Activated CD8-positive, alpha-beta T cell treated with anti-CD3 and anti-CD28 coated beads, Interleukin-2, amount 10 ng/mL, durations not matched to agents 7 days and 5 days (primary cell): ENCODE measurements at regions of chr10 and their contacts with region 1.

Region 1: GRCh38 chr10:69392481-69393000 is 24.2 kb downstream of the TACR2 start:
- DNase-seq: peak; percentile 90
- ATAC-seq: peak; percentile 92
- H3K4me3 Mint-ChIP-seq: no peak overlapping the region
- H3K27ac Mint-ChIP-seq: peak overlapping the region; percentile 71
- H3K4me1 Mint-ChIP-seq: peaks cover 29% of the 10 kb centered on the region
- H3K27me3 Mint-ChIP-seq: no peaks in the 10 kb centered on the region

Region 2: GRCh38 chr10:69229622-69229928 is 163.0 kb before region 1 on chr10:
- CTCF ChIA-PET with region 1: interaction called, 173 read pairs
- POLR2A ChIA-PET with region 1: no interaction called
- DNase-seq: no peak
- ATAC-seq: no peak
- H3K4me3 Mint-ChIP-seq: peak overlapping the region; percentile 80
- H3K27ac Mint-ChIP-seq: peak overlapping the region; percentile 98
- H3K4me1 Mint-ChIP-seq: peaks cover 86% of the 10 kb centered on the region
- H3K27me3 Mint-ChIP-seq: no peaks in the 10 kb centered on the region

Region 3: GRCh38 chr10:69237528-69238159 is 154.9 kb before region 1 on chr10:
- CTCF ChIA-PET with region 1: interaction called, 173 read pairs
- POLR2A ChIA-PET with region 1: interaction called, 3 read pairs
- DNase-seq: peak; percentile 91
- ATAC-seq: peak; percentile 98
- H3K4me3 Mint-ChIP-seq: no peak overlapping the region
- H3K27ac Mint-ChIP-seq: no peak overlapping the region
- H3K4me1 Mint-ChIP-seq: peaks cover 42% of the 10 kb centered on the region
- H3K27me3 Mint-ChIP-seq: no peaks in the 10 kb centered on the region

Region 4: DNA sequence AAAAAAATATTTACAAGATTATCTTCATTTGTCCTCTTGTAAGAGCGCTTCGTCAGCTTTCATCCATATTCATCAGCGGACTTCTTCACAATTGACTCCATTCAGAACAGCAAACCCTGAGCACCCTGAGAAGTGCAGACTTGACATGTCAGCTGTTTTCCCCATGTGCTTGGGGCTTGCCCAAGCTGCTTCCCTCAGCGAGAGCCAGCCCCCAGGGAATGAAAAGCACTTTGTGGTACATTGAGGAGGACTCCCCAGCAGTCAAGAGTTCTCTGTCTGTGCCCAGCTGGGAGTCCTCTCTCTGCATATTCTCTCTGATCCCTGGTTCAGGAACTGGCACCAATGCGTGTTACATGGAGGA is 149.7 kb before region 1 on chr10:
- CTCF ChIA-PET with region 1: interaction called, 173 read pairs
- POLR2A ChIA-PET with region 1: interaction called, 3 read pairs
- DNase-seq: no peak
- ATAC-seq: no peak
- H3K4me3 Mint-ChIP-seq: no peak overlapping the region
- H3K27ac Mint-ChIP-seq: no peak overlapping the region
- H3K4me1 Mint-ChIP-seq: peaks cover 21% of the 10 kb centered on the region
- H3K27me3 Mint-ChIP-seq: no peaks in the 10 kb centered on the region

Region 5: GRCh38 chr10:69327463-69328379 is 64.8 kb before region 1 on chr10:
- CTCF ChIA-PET with region 1: interaction called, 17 read pairs
- POLR2A ChIA-PET with region 1: no interaction called
- DNase-seq: peak; percentile 47
- ATAC-seq: peak; percentile 73
- H3K4me3 Mint-ChIP-seq: peak overlapping the region; percentile 58
- H3K27ac Mint-ChIP-seq: peak overlapping the region; percentile 71
- H3K4me1 Mint-ChIP-seq: peaks cover 64% of the 10 kb centered on the region
- H3K27me3 Mint-ChIP-seq: no peaks in the 10 kb centered on the region